PC-9 (cell line): ENCODE measurements at regions of chr2 and their contacts with region 1.

Region 1: DNA sequence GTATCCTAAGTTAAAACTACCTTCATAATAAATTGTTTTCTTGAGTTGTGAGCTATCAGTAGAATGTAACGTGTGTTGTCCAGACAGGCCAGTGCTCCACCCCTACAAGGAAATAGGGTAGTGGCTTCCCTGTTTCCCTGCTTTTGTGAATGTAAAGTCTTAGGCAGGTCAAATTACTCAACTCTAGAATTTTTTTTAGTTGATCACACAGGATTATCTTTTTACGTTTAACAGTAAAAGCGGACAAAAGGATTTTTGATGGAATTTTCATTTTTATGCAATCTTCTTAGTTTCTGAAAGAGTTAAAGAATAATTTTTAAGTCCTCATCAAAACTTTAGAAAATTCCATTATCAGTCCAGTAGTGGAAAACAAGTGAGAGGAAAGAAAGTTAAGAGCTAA is 38.2 kb downstream of the GPD2 start:
- DNase-seq: no peak
- H3K4me3 ChIP-seq: no peak overlapping the region
- H3K27ac ChIP-seq: no peak overlapping the region
- H3K4me1 ChIP-seq: no peaks in the 10 kb centered on the region
- H3K27me3 ChIP-seq: no peaks in the 10 kb centered on the region
- CTCF ChIP-seq: no peak

Region 2: DNA sequence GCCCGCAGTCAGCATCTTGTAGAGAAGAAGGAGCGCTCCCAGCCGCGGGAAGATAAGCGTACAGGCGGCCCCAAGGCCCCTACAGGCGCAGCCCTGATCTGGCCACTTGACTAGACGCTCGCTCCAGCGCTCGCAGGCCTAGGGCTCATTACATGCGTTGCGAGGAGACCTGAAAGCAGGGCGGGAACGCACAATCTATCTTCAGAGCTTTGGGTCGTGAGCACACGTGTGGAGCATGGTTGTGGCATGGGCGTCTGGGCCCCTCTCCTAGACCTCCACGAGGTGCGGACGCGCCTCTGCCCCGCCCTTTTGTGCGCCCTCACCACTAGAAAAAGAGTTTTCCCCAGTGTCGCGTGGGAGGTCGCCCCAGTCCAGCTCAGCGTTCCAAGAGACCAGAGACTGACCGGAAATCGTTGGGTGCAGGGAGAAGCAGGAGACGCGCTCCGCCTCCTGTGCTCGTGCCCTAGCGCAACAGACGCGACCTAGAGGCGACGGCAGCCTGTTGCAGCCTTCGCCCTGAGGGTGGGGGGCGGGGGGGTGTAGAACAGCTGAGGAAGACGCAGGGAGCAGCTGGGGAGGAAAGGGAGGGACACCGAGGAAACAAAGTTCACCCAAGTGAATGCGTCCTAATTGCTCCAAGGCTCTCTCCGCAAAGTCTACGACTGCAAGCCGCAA is 154.5 kb before region 1 on chr2:
- CTCF ChIA-PET with region 1: no interaction called
- POLR2A ChIA-PET with region 1: interaction called, 16 read pairs
- intact Hi-C with region 1: no loop called
- DNase-seq: no peak
- H3K4me3 ChIP-seq: no peak overlapping the region
- H3K27ac ChIP-seq: no peak overlapping the region
- H3K4me1 ChIP-seq: no peaks in the 10 kb centered on the region
- H3K27me3 ChIP-seq: no peaks in the 10 kb centered on the region
- CTCF ChIP-seq: no peak

Region 3: GRCh38 chr2:156601855-156602551 is 127.6 kb after region 1 on chr2:
- CTCF ChIA-PET with region 1: no interaction called
- POLR2A ChIA-PET with region 1: no interaction called
- intact Hi-C with region 1: no loop called
- DNase-seq: no peak
- H3K4me3 ChIP-seq: no peak overlapping the region
- H3K27ac ChIP-seq: no peak overlapping the region
- H3K4me1 ChIP-seq: no peaks in the 10 kb centered on the region
- H3K27me3 ChIP-seq: no peaks in the 10 kb centered on the region
- CTCF ChIP-seq: no peak